ENCODE measurements at regions of chr15 and their contacts with region 1.

Region 1: DNA sequence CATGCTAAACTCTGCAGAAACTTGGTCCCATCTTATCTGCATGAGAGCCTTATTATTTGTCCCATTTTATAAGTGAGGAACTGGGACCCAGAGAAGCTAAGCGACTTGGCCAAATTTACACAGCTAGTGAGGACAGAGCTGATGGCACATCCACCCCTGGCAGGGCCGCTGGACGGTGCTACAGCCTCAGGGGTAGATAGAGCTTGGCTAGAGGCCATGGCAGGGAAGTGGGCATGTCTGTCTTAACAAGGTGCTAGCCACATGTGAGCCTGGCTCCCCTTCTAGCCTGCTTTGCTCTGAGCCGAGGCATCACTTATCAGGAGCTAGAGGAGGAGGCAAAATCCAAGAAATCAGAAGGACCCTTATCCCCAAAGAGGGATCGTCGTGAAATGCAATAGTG is 36.7 kb upstream of the SYNM start:
- DNase-seq: peak in 1 of 5 donors; percentile 12
- ATAC-seq: no peak
- H3K4me3 ChIP-seq: no peak overlapping the region
- H3K27ac ChIP-seq: no peak overlapping the region
- H3K4me1 ChIP-seq: peaks cover 0 to 6% (median 0%) of the 10 kb centered on the region in 12 donors
- H3K27me3 ChIP-seq: no peaks in the 10 kb centered on the region
- CTCF ChIP-seq: no peak
- POLR2A ChIP-seq: no peak

Region 2: DNA sequence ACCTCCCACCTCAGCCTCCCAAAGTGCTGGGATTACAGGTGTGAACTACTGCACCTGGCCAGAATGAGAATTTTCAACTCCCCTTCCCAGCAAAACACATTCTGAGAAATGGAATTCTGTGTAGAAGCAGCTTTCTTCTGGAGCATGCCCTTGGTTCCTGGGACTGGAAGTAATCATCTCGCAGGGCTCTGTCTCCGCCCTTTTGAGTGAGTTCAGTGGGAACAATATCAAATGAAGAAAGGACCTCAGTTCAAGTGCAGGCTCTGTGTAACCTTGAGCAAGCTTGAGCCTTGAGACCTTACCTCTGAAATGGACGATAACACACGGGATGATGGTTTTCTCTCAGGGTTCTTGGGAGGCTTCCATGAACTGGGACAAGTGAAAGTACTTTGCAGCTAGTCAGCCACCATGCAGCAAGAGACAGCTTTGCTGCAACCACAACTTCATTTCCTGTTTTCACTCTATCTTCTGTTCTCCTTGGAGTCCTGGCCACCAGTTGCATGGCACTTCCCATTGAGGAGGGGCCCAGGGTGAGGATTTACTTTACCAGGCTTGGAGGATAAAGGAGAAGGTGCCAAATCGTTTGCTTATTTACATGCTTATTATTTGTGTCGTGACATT is 455.6 kb before region 1 on chr15:
- intact Hi-C with region 1: no loop called
- DNase-seq: no peak
- ATAC-seq: no peak
- H3K4me3 ChIP-seq: no peak overlapping the region
- H3K27ac ChIP-seq: no peak overlapping the region
- H3K4me1 ChIP-seq: peaks cover 0 to 5% (median 0%) of the 10 kb centered on the region in 12 donors
- H3K27me3 ChIP-seq: peaks cover 0 to 34% (median 2%) of the 10 kb centered on the region in 9 donors
- CTCF ChIP-seq: no peak
- POLR2A ChIP-seq: no peak

Region 3: GRCh38 chr15:98635848-98636247 is 432.3 kb before region 1 on chr15:
- intact Hi-C with region 1: loop called in 3 of 10 experiments (anchors 10 kb)
- DNase-seq: no peak
- ATAC-seq: no peak
- H3K4me3 ChIP-seq: no peak overlapping the region
- H3K27ac ChIP-seq: no peak overlapping the region
- H3K4me1 ChIP-seq: no peaks in the 10 kb centered on the region
- H3K27me3 ChIP-seq: peaks cover 0 to 39% (median 0%) of the 10 kb centered on the region in 9 donors
- CTCF ChIP-seq: no peak
- POLR2A ChIP-seq: no peak

Region 4: GRCh38 chr15:98896802-98897732 is 171.1 kb before region 1 on chr15:
- intact Hi-C with region 1: loop called in 1 of 10 experiments (anchors 10 kb)
- DNase-seq: peak in 1 of 5 donors; percentile 52
- ATAC-seq: peak; percentile 28 to 92 (median 70)
- H3K4me3 ChIP-seq: no peak overlapping the region
- H3K27ac ChIP-seq: peak overlapping the region in 8 of 12 donors; percentile 26 to 73 (median 42)
- H3K4me1 ChIP-seq: peaks cover 0 to 39% (median 7%) of the 10 kb centered on the region in 12 donors
- H3K27me3 ChIP-seq: no peaks in the 10 kb centered on the region
- CTCF ChIP-seq: no peak
- POLR2A ChIP-seq: no peak

Region 5: GRCh38 chr15:98943601-98944151 is 124.5 kb before region 1 on chr15:
- intact Hi-C with region 1: loop called in 1 of 10 experiments (anchors 10 kb)
- DNase-seq: peak in 4 of 5 donors; percentile 73 to 81 (median 78)
- ATAC-seq: peak; percentile 83 to 91 (median 86)
- H3K4me3 ChIP-seq: no peak overlapping the region
- H3K27ac ChIP-seq: peak overlapping the region in 11 of 12 donors; percentile 14 to 79 (median 72)
- H3K4me1 ChIP-seq: peaks cover 0 to 48% (median 19%) of the 10 kb centered on the region in 12 donors
- H3K27me3 ChIP-seq: no peaks in the 10 kb centered on the region
- CTCF ChIP-seq: peak in 1 of 12 donors; percentile 8
- POLR2A ChIP-seq: no peak

Region 6: GRCh38 chr15:99014803-99015676 is 53.1 kb before region 1 on chr15:
- intact Hi-C with region 1: no loop called
- DNase-seq: peak; percentile 40 to 75 (median 46)
- ATAC-seq: peak; percentile 63 to 89 (median 87)
- H3K4me3 ChIP-seq: peak overlapping the region; percentile 11 to 74 (median 62)
- H3K27ac ChIP-seq: peak overlapping the region in 3 of 12 donors; percentile 23 to 60 (median 47)
- H3K4me1 ChIP-seq: peaks cover 0 to 20% (median 8%) of the 10 kb centered on the region in 12 donors
- H3K27me3 ChIP-seq: peaks cover 0 to 9% (median 0%) of the 10 kb centered on the region in 9 donors
- CTCF ChIP-seq: no peak
- POLR2A ChIP-seq: no peak

Region 7: GRCh38 chr15:99104788-99105513 is 36.8 kb after region 1 on chr15 and contains the start of gene SYNM:
- intact Hi-C with region 1: no loop called
- DNase-seq: peak; percentile 83 to 92 (median 89)
- ATAC-seq: peak; percentile 77 to 84 (median 82)
- H3K4me3 ChIP-seq: peak within 1 kb of the TSS; percentile 60 to 79 (median 72)
- H3K27ac ChIP-seq: peak within 1 kb of the TSS; percentile 48 to 98 (median 92)
- H3K4me1 ChIP-seq: peaks cover 0 to 56% (median 25%) of the 10 kb centered on the region in 12 donors
- H3K27me3 ChIP-seq: peaks cover 0 to 55% (median 0%) of the 10 kb centered on the region in 9 donors
- CTCF ChIP-seq: peak; percentile 42 to 98 (median 93)
- POLR2A ChIP-seq: peak in 1 of 2 donors; percentile 96
- total RNA-seq, gene SYNM: 197 to 455 (median 311) TPM